ENCODE measurements at regions of chr6 and their contacts with region 1.

Region 1: DNA sequence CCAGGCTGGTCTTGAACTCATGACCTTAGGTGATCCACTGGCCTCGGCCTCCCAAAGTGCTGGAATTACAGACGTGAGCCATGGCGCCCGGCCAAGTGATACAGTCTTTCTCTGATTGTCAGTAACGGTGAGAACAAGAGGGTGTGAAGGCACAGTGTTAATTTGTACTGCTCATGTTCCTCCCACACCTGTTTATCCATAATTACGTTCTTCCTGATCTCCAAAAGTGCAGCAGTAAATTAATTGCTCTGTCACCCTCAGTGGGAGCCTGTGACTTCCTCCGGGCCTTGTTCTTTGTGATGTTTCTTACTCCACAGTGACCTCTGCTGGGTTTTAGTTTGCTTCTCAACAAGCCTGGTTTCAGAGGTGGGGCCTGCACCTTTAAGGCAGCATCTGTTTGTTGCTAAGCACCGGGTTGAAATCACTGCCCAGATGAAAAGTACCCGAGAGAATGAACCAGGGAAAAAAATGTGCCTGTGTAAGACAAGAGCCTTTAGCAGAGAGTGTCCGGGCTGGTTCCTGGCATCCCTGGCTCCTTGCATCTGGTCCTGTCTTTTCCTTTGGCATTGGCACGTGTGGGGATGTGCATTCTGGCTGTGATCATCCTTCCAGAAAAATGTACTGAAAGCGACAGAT is 89.1 kb upstream of the CLDN20 start:
- DNase-seq: peak; percentile 25 to 85 (median 42)
- ATAC-seq: peak; percentile 58
- H3K4me3 ChIP-seq: no peak overlapping the region
- H3K4me3 Mint-ChIP-seq: no peak overlapping the region
- H3K27ac ChIP-seq: no peak overlapping the region
- H3K27ac Mint-ChIP-seq: no peak overlapping the region
- H3K4me1 ChIP-seq: peaks cover 20% of the 10 kb centered on the region
- H3K4me1 Mint-ChIP-seq: peaks cover 35% of the 10 kb centered on the region
- H3K27me3 ChIP-seq: no peaks in the 10 kb centered on the region
- H3K27me3 Mint-ChIP-seq: no peaks in the 10 kb centered on the region
- CTCF ChIP-seq: peak; percentile 49

Region 2: DNA sequence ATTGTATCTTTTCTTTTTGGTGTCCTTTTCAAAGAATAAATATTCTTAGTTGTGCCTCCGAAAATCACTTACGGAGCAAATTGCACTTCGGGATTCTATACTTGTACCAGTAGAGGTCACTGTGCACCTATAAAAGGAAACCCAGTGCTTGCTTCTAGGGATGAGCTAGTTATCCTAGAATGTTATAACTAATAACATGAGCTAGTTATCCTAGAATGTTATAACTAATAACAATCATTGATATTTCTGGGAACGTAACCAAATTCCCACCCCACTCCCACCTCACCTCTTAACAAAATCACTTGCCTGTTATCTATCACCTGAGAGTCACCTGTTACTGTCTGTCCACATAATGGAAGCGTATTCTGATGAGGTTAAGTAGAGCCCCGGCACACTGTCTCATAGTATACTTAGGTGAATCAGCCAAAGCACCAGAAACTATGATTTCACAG is 306.5 kb before region 1 on chr6:
- CTCF ChIA-PET with region 1: no interaction called
- POLR2A ChIA-PET with region 1: interaction called, 3 read pairs
- intact Hi-C with region 1: loop called (anchors 1 to 2 kb)
- DNase-seq: peak in 3 of 14 experiments; percentile 34 to 44 (median 41)
- ATAC-seq: no peak
- H3K4me3 ChIP-seq: no peak overlapping the region
- H3K4me3 Mint-ChIP-seq: no peak overlapping the region
- H3K27ac ChIP-seq: no peak overlapping the region
- H3K27ac Mint-ChIP-seq: no peak overlapping the region
- H3K4me1 ChIP-seq: peaks cover 3% of the 10 kb centered on the region
- H3K4me1 Mint-ChIP-seq: peaks cover 1% of the 10 kb centered on the region
- H3K27me3 ChIP-seq: no peaks in the 10 kb centered on the region
- H3K27me3 Mint-ChIP-seq: no peaks in the 10 kb centered on the region
- CTCF ChIP-seq: peak; percentile 71

Region 3: DNA sequence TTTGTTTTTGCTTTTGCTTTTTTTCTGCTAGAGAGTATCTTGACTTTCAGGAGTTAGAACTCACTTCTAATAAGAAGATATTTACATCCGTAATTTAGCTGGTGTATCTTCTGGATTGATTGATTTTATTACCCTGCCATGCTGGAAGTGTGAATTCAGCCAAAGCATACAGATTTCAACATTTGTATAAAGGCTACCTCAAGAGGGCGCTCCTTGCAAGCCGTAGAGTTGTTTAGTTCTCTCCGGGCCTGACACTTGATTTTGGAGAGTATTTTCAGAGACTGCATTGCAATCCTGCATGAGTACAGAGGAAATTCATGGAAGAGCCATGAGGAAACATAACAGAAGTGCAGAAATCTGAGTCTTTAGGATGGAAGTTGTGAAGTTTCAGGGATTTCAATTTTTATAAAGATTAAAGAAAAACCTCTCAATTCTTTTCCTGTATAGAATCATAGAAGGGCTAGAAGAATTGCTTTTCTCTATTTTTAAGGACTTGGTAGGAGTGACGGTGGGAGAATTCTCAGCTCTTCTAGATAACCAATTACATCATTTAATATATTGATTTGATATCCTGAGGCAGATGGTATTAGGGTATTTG is 246.3 kb before region 1 on chr6:
- CTCF ChIA-PET with region 1: interaction called, 4 read pairs
- POLR2A ChIA-PET with region 1: no interaction called
- intact Hi-C with region 1: loop called (anchors 1 kb)
- DNase-seq: peak; percentile 16 to 74 (median 44)
- ATAC-seq: peak; percentile 49
- H3K4me3 ChIP-seq: no peak overlapping the region
- H3K4me3 Mint-ChIP-seq: no peak overlapping the region
- H3K27ac ChIP-seq: no peak overlapping the region
- H3K27ac Mint-ChIP-seq: no peak overlapping the region
- H3K4me1 ChIP-seq: no peaks in the 10 kb centered on the region
- H3K4me1 Mint-ChIP-seq: peaks cover 8% of the 10 kb centered on the region
- H3K27me3 ChIP-seq: no peaks in the 10 kb centered on the region
- H3K27me3 Mint-ChIP-seq: no peaks in the 10 kb centered on the region
- CTCF ChIP-seq: peak; percentile 76

Region 4: GRCh38 chr6:155026022-155026726 is 148.5 kb before region 1 on chr6:
- CTCF ChIA-PET with region 1: no interaction called
- POLR2A ChIA-PET with region 1: no interaction called
- intact Hi-C with region 1: no loop called
- DNase-seq: no peak
- ATAC-seq: no peak
- H3K4me3 ChIP-seq: no peak overlapping the region
- H3K4me3 Mint-ChIP-seq: no peak overlapping the region
- H3K27ac ChIP-seq: no peak overlapping the region
- H3K27ac Mint-ChIP-seq: no peak overlapping the region
- H3K4me1 ChIP-seq: no peaks in the 10 kb centered on the region
- H3K4me1 Mint-ChIP-seq: no peaks in the 10 kb centered on the region
- H3K27me3 ChIP-seq: no peaks in the 10 kb centered on the region
- H3K27me3 Mint-ChIP-seq: no peaks in the 10 kb centered on the region
- CTCF ChIP-seq: no peak

Region 5: GRCh38 chr6:155248008-155249001 is 73.6 kb after region 1 on chr6:
- CTCF ChIA-PET with region 1: interaction called, 10 read pairs
- POLR2A ChIA-PET with region 1: no interaction called
- intact Hi-C with region 1: loop called in 1 of 2 experiments (anchors 5 kb)
- DNase-seq: peak in 4 of 14 experiments; percentile 10 to 40 (median 18)
- ATAC-seq: no peak
- H3K4me3 ChIP-seq: no peak overlapping the region
- H3K4me3 Mint-ChIP-seq: no peak overlapping the region
- H3K27ac ChIP-seq: no peak overlapping the region
- H3K27ac Mint-ChIP-seq: no peak overlapping the region
- H3K4me1 ChIP-seq: no peaks in the 10 kb centered on the region
- H3K4me1 Mint-ChIP-seq: no peaks in the 10 kb centered on the region
- H3K27me3 ChIP-seq: no peaks in the 10 kb centered on the region
- H3K27me3 Mint-ChIP-seq: no peaks in the 10 kb centered on the region
- CTCF ChIP-seq: no peak

Region 6: GRCh38 chr6:155472886-155473285 is 298.2 kb after region 1 on chr6:
- CTCF ChIA-PET with region 1: no interaction called
- POLR2A ChIA-PET with region 1: no interaction called
- intact Hi-C with region 1: no loop called
- DNase-seq: no peak
- ATAC-seq: no peak
- H3K4me3 ChIP-seq: no peak overlapping the region
- H3K4me3 Mint-ChIP-seq: no peak overlapping the region
- H3K27ac ChIP-seq: no peak overlapping the region
- H3K27ac Mint-ChIP-seq: no peak overlapping the region
- H3K4me1 ChIP-seq: no peaks in the 10 kb centered on the region
- H3K4me1 Mint-ChIP-seq: no peaks in the 10 kb centered on the region
- H3K27me3 ChIP-seq: no peaks in the 10 kb centered on the region
- H3K27me3 Mint-ChIP-seq: no peaks in the 10 kb centered on the region
- CTCF ChIP-seq: no peak